SK-N-SH (cell line): ENCODE measurements at regions of chr20 and their contacts with region 1.

Region 1: GRCh38 chr20:58087193-58087858 is 141.1 kb downstream of the ANKRD60 start:
- DNase-seq: peak; percentile 76
- H3K4me3 ChIP-seq: no peak overlapping the region; a peak in 1 of 4 replicates
- H3K27ac ChIP-seq: peak overlapping the region in 1 of 2 experiments; percentile 28; a peak in 1 of 4 replicates
- H3K4me1 ChIP-seq: no peaks in the 10 kb centered on the region; a peak in 2 of 4 replicates
- H3K27me3 ChIP-seq: no peaks in the 10 kb centered on the region
- CTCF ChIP-seq: peak; percentile 90
- EP300 ChIP-seq: no peak
- RAD21 ChIP-seq: peak; percentile 92

Region 2: DNA sequence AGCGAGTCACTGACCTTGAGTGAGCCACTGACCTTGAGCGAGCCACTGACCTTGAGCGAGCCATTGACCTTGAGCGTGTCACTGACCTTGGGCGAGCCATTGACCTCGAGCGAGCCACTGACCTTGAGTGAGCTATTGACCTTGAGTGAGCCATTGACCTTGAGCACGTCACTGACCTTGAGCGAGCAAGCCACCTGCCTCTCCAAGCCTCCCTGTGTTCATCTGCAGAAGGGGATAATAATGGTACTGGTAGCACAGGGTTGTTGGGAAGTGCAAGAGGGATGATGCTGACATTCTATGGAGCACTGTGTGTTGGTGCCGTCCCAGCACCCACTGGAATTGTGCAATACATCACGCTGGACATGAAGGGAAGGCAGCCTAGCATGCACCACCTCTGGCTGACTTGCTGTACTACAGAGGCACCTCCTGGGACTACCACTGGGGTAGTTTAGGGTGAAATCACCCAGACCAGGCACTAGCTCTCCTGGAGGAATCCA is 622.6 kb before region 1 on chr20:
- CTCF ChIA-PET with region 1: no interaction called
- POLR2A ChIA-PET with region 1: no interaction called
- DNase-seq: no peak
- H3K4me3 ChIP-seq: no peak overlapping the region
- H3K27ac ChIP-seq: no peak overlapping the region
- H3K4me1 ChIP-seq: peaks cover 0 to 6% of the 10 kb centered on the region in 2 experiments; a peak in 1 of 4 replicates
- H3K27me3 ChIP-seq: no peaks in the 10 kb centered on the region
- CTCF ChIP-seq: no peak
- EP300 ChIP-seq: no peak
- RAD21 ChIP-seq: no peak

Region 3: GRCh38 chr20:57654363-57654997 is 432.8 kb before region 1 on chr20:
- CTCF ChIA-PET with region 1: interaction called, 32 read pairs
- POLR2A ChIA-PET with region 1: no interaction called
- DNase-seq: peak; percentile 93
- H3K4me3 ChIP-seq: no peak overlapping the region; a peak in 1 of 4 replicates
- H3K27ac ChIP-seq: peak overlapping the region in 1 of 2 experiments; percentile 17; a peak in 2 of 4 replicates
- H3K4me1 ChIP-seq: peaks cover 0 to 16% of the 10 kb centered on the region in 2 experiments; a peak in 1 of 4 replicates
- H3K27me3 ChIP-seq: no peaks in the 10 kb centered on the region
- CTCF ChIP-seq: peak; percentile 93
- EP300 ChIP-seq: no peak
- RAD21 ChIP-seq: peak; percentile 92

Region 4: GRCh38 chr20:57993716-57994431 is 93.5 kb before region 1 on chr20:
- CTCF ChIA-PET with region 1: interaction called, 10 read pairs
- POLR2A ChIA-PET with region 1: no interaction called
- DNase-seq: no peak
- H3K4me3 ChIP-seq: no peak overlapping the region
- H3K27ac ChIP-seq: peak overlapping the region; percentile 10 to 71; a peak in 3 of 4 replicates
- H3K4me1 ChIP-seq: peaks cover 4 to 64% of the 10 kb centered on the region in 2 experiments; a peak in 3 of 4 replicates
- H3K27me3 ChIP-seq: no peaks in the 10 kb centered on the region
- CTCF ChIP-seq: no peak
- EP300 ChIP-seq: peak in 1 of 2 experiments; percentile 17; a peak in 1 of 4 replicates
- RAD21 ChIP-seq: no peak

Region 5: GRCh38 chr20:58072695-58073671 is 14.3 kb before region 1 on chr20:
- CTCF ChIA-PET with region 1: interaction called, 46 read pairs
- POLR2A ChIA-PET with region 1: no interaction called
- DNase-seq: no peak
- H3K4me3 ChIP-seq: no peak overlapping the region
- H3K27ac ChIP-seq: no peak overlapping the region
- H3K4me1 ChIP-seq: peaks cover 0 to 26% of the 10 kb centered on the region in 2 experiments; a peak in 2 of 4 replicates
- H3K27me3 ChIP-seq: no peaks in the 10 kb centered on the region; the same call in 1 of the 2 replicates
- CTCF ChIP-seq: no peak
- EP300 ChIP-seq: no peak
- RAD21 ChIP-seq: no peak

Region 6: DNA sequence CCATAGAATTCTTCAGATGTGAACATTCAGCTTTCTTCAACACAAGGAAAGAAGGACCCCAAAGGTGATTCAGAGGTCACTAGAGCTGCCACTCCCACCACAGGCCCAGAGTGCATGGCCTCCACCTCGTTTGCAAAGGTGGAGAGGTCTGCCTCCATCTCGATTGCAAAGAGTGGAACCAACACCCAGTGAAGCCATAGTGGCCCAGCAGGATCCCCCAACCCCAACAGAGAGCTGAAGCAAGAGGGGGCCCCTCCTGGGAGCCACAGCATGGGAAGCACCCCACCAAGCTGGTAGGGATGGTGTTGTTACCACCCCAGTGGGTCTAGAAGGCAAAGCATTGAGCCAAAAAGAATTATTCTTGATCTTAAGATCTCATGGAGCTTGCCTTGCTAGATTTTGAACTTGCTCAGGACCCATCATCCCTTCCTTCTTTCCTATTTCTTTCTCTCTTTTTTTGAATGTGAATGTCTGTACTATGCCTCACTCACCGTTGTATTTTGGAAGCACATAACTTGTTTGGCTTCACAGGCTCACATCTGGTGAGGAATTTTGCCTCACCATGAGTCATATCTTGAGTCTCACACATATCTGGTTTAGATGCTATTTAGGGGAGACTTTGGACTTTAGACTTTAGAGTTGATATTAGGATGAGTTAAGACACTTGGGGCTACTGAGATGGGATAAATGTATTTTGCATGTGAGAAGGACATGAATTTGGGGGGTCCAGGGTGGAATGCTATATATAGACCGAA is 22.0 kb after region 1 on chr20:
- CTCF ChIA-PET with region 1: interaction called, 14 read pairs
- POLR2A ChIA-PET with region 1: no interaction called
- DNase-seq: no peak
- H3K4me3 ChIP-seq: no peak overlapping the region
- H3K27ac ChIP-seq: no peak overlapping the region
- H3K4me1 ChIP-seq: peaks cover 0 to 4% of the 10 kb centered on the region in 2 experiments; a peak in 1 of 4 replicates
- H3K27me3 ChIP-seq: no peaks in the 10 kb centered on the region
- CTCF ChIP-seq: no peak
- EP300 ChIP-seq: 0 out of 4 replicates have a peak, but pooled peaks of 1 of the 2 experiments have one; percentile 21
- RAD21 ChIP-seq: no peak

Region 7: DNA sequence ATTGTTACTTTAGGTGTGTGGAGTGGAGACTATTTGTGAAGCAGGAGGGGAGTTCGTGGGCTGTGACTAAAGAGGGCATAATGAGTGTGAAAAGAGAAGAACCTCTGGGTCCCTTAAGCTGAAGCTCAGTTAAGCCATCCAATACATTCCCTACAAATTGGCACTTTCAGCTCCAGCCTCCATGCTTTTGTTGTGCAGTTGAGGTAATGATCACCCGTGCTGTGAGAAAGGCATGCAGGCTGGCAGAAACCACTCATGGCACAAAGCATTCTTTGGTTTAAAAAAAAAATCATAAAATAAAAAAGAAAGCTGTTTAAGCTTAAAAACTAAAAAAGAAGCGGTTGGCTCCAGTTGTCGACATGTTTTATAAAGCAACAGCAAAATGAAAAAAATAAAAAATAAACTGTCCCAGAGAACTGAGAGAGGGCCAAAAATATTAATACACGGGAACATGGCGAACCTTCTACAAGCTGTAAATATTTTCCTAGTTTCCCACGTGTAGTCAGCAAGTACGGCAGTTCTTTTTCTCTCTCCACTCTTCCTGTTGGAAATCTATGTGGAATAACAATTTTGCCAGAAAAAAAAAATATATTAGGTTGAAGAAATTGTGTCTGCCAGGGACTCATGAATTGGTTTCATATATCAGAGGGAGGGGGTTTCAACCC is 58.9 kb after region 1 on chr20:
- CTCF ChIA-PET with region 1: no interaction called
- POLR2A ChIA-PET with region 1: no interaction called
- DNase-seq: no peak
- H3K4me3 ChIP-seq: no peak overlapping the region
- H3K27ac ChIP-seq: no peak overlapping the region
- H3K4me1 ChIP-seq: peaks cover 0 to 21% of the 10 kb centered on the region in 2 experiments; a peak in 1 of 4 replicates
- H3K27me3 ChIP-seq: no peaks in the 10 kb centered on the region; the same call in 1 of the 2 replicates
- CTCF ChIP-seq: no peak
- EP300 ChIP-seq: no peak
- RAD21 ChIP-seq: no peak